ENCODE measurements at regions of chr1 and their contacts with region 1.

Region 1: GRCh38 chr1:44907893-44908292 is 64.8 kb upstream of the PTCH2 start:
- DNase-seq: no peak
- ATAC-seq: no peak
- H3K4me3 ChIP-seq: no peak overlapping the region
- H3K4me3 Mint-ChIP-seq: no peak overlapping the region
- H3K27ac ChIP-seq: no peak overlapping the region
- H3K27ac Mint-ChIP-seq: peak overlapping the region in 1 of 2 donors; percentile 2
- H3K4me1 ChIP-seq: no peaks in the 10 kb centered on the region
- H3K4me1 Mint-ChIP-seq: no peaks in the 10 kb centered on the region
- H3K27me3 ChIP-seq: no peaks in the 10 kb centered on the region
- H3K27me3 Mint-ChIP-seq: no peaks in the 10 kb centered on the region

Region 2: DNA sequence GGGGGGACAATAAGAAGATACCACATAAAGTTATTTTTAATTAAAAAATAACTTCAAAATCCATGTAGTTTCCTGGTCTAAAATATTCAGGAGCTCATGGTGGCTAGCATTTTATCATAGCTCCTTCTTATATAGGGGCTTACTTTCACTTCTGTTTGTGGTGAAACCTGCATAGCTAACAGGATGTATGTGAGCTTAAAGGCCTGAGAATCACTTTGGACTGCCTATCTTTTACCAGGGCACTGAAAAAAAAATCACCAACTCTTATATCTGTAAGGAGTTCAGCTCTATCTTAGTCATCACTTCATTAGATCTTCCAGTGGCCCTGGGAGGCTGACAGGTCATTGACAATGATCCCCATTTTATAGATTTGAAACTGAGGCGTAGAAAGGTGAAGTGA is 125.5 kb after region 1 on chr1:
- CTCF ChIA-PET with region 1: no interaction called
- POLR2A ChIA-PET with region 1: interaction called in 1 of 2 experiments, 10 read pairs
- DNase-seq: no peak
- ATAC-seq: peak in 1 of 4 experiments; percentile 54
- H3K4me3 ChIP-seq: no peak overlapping the region
- H3K4me3 Mint-ChIP-seq: no peak overlapping the region
- H3K27ac ChIP-seq: no peak overlapping the region
- H3K27ac Mint-ChIP-seq: no peak overlapping the region
- H3K4me1 ChIP-seq: peaks cover 0 to 2% of the 10 kb centered on the region in 2 experiments
- H3K4me1 Mint-ChIP-seq: peaks cover 0 to 3% (median 2%) of the 10 kb centered on the region in 3 donors
- H3K27me3 ChIP-seq: no peaks in the 10 kb centered on the region
- H3K27me3 Mint-ChIP-seq: no peaks in the 10 kb centered on the region

Region 3: DNA sequence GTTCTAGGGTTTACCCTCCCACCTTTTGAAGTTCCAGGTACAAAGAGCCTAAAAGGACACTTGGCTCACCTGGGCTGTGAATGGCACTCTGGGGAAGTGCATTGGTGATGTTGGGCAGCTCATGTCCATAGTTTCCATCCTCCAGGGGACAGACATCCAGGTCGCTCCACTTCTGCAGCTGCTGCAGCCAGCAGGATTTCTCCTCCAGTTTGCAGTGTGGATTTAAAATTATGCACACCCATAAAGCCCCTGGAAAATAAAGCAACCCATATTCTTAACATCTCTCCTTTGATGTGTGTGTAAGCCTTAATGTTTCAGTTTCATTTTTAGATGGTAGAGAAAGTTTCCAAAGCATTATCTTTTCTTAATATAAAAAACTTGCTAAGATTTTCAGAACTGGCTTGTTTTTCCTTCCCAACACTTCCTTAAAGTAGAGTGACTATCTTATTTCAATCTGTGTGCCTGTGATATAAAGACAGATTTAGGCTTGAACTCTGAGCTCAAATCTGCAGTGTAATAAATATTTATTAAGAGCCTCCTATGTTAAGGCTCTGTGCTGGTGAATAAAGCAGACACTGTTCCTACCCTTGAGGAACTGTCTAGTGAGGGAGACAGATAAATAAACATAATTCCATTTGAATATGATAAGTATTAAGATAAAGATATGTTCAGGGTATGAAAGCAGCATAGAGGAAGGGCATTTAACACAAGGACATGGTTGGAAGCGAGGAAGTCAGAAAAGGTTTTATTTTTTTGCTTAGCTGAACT is 143.3 kb after region 1 on chr1:
- CTCF ChIA-PET with region 1: no interaction called
- POLR2A ChIA-PET with region 1: no interaction called
- DNase-seq: peak in 3 of 35 experiments; percentile 3 to 34 (median 6)
- ATAC-seq: peak; percentile 66 to 83 (median 74)
- H3K4me3 ChIP-seq: peak overlapping the region; percentile 31 to 39
- H3K4me3 Mint-ChIP-seq: peak overlapping the region; percentile 66 to 77 (median 72)
- H3K27ac ChIP-seq: peak overlapping the region; percentile 71
- H3K27ac Mint-ChIP-seq: peak overlapping the region; percentile 93 to 96
- H3K4me1 ChIP-seq: peaks cover 9 to 11% of the 10 kb centered on the region in 2 experiments
- H3K4me1 Mint-ChIP-seq: peaks cover 14 to 23% (median 20%) of the 10 kb centered on the region in 3 donors
- H3K27me3 ChIP-seq: no peaks in the 10 kb centered on the region
- H3K27me3 Mint-ChIP-seq: no peaks in the 10 kb centered on the region

Region 4: GRCh38 chr1:45172024-45172423 is 264.1 kb after region 1 on chr1:
- CTCF ChIA-PET with region 1: no interaction called
- POLR2A ChIA-PET with region 1: interaction called in 1 of 2 experiments, 12 read pairs
- DNase-seq: no peak
- ATAC-seq: no peak
- H3K4me3 ChIP-seq: no peak overlapping the region
- H3K4me3 Mint-ChIP-seq: no peak overlapping the region
- H3K27ac ChIP-seq: no peak overlapping the region
- H3K27ac Mint-ChIP-seq: no peak overlapping the region
- H3K4me1 ChIP-seq: no peaks in the 10 kb centered on the region
- H3K4me1 Mint-ChIP-seq: peaks cover 2 to 5% (median 4%) of the 10 kb centered on the region in 3 donors
- H3K27me3 ChIP-seq: no peaks in the 10 kb centered on the region
- H3K27me3 Mint-ChIP-seq: peaks cover 0 to 4% of the 10 kb centered on the region in 2 donors

Region 5: DNA sequence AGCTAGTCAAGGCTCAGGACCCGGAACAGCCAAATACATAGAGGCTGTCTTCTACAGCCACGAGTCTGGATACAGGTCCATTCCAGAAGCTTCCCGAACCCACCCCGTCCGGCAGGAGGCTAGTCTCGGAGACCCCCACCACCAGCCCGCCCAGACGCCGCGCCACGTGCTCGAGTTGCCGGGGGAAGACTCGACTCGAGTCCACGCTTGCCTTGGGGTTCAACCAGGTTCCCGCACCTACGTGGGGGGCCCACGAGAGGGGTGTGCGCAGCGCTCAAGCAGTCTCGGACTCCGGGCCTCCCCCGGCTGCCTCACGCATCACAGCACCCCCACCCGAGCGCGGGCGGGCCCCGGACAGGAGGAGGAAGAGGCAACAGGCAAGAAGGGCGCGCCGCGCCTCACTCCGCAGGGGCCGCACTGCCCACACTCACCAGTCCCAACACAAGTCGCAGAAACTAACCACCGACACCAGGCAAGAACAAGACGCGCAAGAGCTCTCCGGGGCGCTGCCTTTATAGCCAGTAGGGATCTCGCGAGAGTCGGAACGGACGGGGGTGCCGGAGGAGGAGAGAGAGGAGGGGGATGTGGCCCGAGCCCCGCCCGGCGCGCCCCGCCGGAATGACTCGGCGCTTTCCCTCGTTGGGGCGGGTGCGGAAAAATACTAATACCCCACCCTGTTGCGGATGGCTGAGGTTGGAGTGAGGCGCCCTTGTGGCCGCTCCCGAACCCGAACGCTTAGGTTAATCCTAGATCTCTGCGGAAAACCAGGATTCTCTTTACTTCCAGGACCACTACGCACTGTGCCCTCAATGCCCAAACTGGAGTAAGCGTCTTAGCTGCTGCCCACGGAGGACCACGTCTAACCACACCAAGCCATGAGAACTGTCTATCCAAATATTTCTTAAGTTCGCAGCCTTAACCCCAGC is 613.8 kb after region 1 on chr1 and contains the start of gene PRDX1:
- CTCF ChIA-PET with region 1: no interaction called
- POLR2A ChIA-PET with region 1: no interaction called
- DNase-seq: peak; percentile 86 to 96 (median 92)
- ATAC-seq: peak; percentile 88 to 93 (median 90)
- H3K4me3 ChIP-seq: peak within 1 kb of the TSS; percentile 82 to 100
- H3K4me3 Mint-ChIP-seq: peak within 1 kb of the TSS; percentile 91 to 97 (median 96)
- H3K27ac ChIP-seq: peak within 1 kb of the TSS; percentile 68
- H3K27ac Mint-ChIP-seq: peak within 1 kb of the TSS; percentile 94 to 95
- H3K4me1 ChIP-seq: peaks cover 0 to 34% of the 10 kb centered on the region in 2 experiments
- H3K4me1 Mint-ChIP-seq: peaks cover 25 to 40% (median 36%) of the 10 kb centered on the region in 3 donors
- H3K27me3 ChIP-seq: peaks cover 0 to 4% of the 10 kb centered on the region in 2 experiments
- H3K27me3 Mint-ChIP-seq: no peaks in the 10 kb centered on the region
- total RNA-seq, gene PRDX1: 59.3 to 156 (median 151) TPM

Region 6: DNA sequence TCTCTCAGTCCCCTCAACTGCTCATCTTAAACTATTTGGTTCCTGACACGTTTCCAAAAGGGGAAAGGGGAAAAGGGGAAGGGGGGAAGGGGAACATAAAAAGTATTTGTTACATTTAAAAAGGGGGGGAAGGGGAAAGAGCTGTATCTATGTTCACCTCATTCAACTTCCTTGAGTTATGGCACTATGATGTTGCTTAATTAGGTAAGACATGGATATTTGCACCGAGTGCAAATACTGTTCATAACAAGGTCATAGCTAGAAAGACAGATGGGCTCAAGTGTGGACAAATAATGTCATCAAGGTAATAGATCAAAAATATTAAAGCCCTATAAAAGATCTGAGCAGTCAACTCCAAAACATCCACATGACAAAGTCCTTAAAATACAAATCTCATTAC is 752.4 kb after region 1 on chr1:
- CTCF ChIA-PET with region 1: no interaction called
- POLR2A ChIA-PET with region 1: interaction called in 1 of 2 experiments, 13 read pairs
- DNase-seq: no peak
- ATAC-seq: no peak
- H3K4me3 ChIP-seq: no peak overlapping the region
- H3K4me3 Mint-ChIP-seq: no peak overlapping the region
- H3K27ac ChIP-seq: no peak overlapping the region
- H3K27ac Mint-ChIP-seq: no peak overlapping the region
- H3K4me1 ChIP-seq: peaks cover 0 to 3% of the 10 kb centered on the region in 2 experiments
- H3K4me1 Mint-ChIP-seq: peaks cover 16 to 20% (median 18%) of the 10 kb centered on the region in 3 donors
- H3K27me3 ChIP-seq: no peaks in the 10 kb centered on the region
- H3K27me3 Mint-ChIP-seq: no peaks in the 10 kb centered on the region

Measured in T-cell (primary cell).